ENCODE measurements at regions of chr15 and their contacts with region 1.

Region 1: DNA sequence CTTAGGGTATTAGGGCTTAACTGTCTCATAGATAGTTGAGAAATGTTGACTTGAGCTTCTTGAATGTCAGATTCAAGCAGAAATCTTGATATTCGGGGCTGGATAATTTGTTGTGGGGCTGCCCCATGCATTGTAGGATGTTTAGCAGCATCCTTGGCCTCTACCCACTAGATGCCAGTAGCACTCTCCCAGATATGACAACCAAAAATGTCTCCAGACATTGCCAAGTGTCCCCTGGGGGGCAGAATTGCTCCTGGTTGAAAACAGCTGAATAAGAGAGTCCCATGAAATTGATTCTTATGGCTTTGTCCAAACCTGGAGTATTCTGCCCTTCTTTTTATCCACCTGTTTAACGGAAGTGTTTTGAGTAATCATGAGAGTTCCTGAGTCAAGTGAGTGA is 15.9 kb upstream of the LCMT2 start:
- DNase-seq: no peak
- H3K4me3 ChIP-seq: no peak overlapping the region
- H3K27ac ChIP-seq: no peak overlapping the region
- H3K4me1 ChIP-seq: no peaks in the 10 kb centered on the region
- H3K27me3 ChIP-seq: no peaks in the 10 kb centered on the region
- CTCF ChIP-seq: no peak
- EP300 ChIP-seq: no peak
- POLR2A ChIP-seq: no peak

Region 2: DNA sequence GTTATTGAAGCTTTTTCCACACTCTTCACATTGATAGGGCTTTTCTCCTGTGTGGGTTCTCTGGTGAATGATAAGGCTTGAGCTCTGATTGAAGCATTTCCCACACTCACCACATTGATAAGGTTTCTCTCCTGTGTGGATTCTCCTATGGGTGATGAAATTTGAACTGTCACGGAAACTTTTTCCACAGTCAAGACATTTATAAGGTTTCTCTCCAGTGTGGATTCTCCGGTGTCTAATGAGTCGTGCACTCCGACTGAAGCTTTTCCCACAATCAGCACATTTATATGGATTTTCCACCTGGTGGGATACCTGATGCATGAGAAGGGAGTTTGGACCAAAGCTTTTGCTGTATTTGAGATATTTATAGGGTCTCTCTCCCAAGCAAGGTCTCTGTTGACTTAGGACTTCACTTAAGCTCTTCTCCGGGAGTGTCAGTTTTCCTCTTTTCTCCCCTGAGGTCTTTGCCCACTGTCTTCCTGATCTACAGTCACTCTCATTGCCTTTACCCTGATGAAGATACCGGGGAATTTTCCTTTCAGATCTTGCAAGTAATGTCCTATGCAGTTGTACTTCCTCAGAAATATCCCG is 15.1 kb after region 1 on chr15:
- in situ Hi-C with region 1: no loop called
- intact Hi-C with region 1: loop called (anchors 1 kb)
- DNase-seq: no peak
- H3K4me3 ChIP-seq: peak overlapping the region in 1 of 4 donors; percentile 0
- H3K27ac ChIP-seq: no peak overlapping the region
- H3K4me1 ChIP-seq: no peaks in the 10 kb centered on the region
- H3K27me3 ChIP-seq: no peaks in the 10 kb centered on the region
- CTCF ChIP-seq: no peak
- EP300 ChIP-seq: no peak
- POLR2A ChIP-seq: no peak